B cell (primary cell): ENCODE measurements at regions of chr7 and their contacts with region 1.

Region 1: DNA sequence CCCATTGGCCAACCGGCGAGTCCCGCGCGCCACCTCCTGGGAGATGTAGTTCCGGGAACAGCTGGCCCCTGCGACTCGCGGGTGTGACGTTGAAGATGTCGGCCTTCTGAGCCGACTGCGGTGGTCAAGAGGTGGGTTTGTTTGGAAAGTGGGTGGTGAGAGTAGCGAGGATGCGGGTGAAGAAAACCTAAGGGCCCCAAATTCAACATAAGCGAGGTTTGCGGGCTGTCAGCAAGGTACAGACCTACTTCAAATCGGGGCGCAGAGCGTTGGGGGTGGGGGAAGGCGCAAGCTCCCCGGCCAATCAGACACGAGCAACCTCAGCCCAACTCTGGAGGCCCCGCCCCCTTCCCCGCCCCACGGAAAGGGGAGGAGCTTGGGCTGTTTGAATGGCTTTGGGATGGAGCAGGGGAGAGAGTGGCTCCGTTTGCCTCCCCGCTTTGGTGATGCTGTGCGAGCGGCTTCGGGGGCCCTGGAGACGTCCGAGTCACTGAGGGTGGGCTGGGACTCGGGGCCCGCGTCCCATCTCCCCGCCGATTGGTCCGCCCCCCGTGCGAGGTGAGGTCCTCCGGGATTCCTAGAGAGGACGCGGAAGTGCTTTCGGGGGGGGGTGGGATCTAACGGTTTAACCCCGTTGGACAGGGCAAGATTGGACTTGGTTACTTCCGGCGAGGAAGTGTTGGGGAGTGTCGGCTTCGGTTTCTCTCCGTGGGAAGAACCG is at the start of gene ZKSCAN5:
- DNase-seq: peak; percentile 99
- ATAC-seq: peak; percentile 84
- H3K4me3 ChIP-seq: peak within 1 kb of the TSS; percentile 76 to 96 (median 93)
- H3K4me3 Mint-ChIP-seq: peak within 1 kb of the TSS; percentile 96
- H3K27ac ChIP-seq: peak within 1 kb of the TSS; percentile 77 to 80
- H3K27ac Mint-ChIP-seq: peak within 1 kb of the TSS; percentile 98
- H3K4me1 ChIP-seq: peaks cover 20 to 27% of the 10 kb centered on the region in 2 donors
- H3K4me1 Mint-ChIP-seq: peaks cover 31% of the 10 kb centered on the region
- H3K27me3 ChIP-seq: no peaks in the 10 kb centered on the region
- H3K27me3 Mint-ChIP-seq: no peaks in the 10 kb centered on the region
- CTCF ChIP-seq: no peak
- total RNA-seq, gene ZKSCAN5: 10.9 and 11.7 TPM in 2 replicates

Region 2: GRCh38 chr7:99465421-99465768 is 39.4 kb before region 1 on chr7:
- CTCF ChIA-PET with region 1: interaction called, 3 read pairs
- POLR2A ChIA-PET with region 1: interaction called, 4 read pairs
- intact Hi-C with region 1: loop called (anchors 1 kb)
- DNase-seq: no peak
- ATAC-seq: no peak
- H3K4me3 ChIP-seq: peak overlapping the region; percentile 80 to 96 (median 83)
- H3K4me3 Mint-ChIP-seq: peak overlapping the region; percentile 99
- H3K27ac ChIP-seq: peak overlapping the region; percentile 50 to 80
- H3K27ac Mint-ChIP-seq: peak overlapping the region; percentile 89
- H3K4me1 ChIP-seq: peaks cover 9 to 23% of the 10 kb centered on the region in 2 donors
- H3K4me1 Mint-ChIP-seq: peaks cover 25% of the 10 kb centered on the region
- H3K27me3 ChIP-seq: no peaks in the 10 kb centered on the region
- H3K27me3 Mint-ChIP-seq: no peaks in the 10 kb centered on the region
- CTCF ChIP-seq: no peak

Region 3: DNA sequence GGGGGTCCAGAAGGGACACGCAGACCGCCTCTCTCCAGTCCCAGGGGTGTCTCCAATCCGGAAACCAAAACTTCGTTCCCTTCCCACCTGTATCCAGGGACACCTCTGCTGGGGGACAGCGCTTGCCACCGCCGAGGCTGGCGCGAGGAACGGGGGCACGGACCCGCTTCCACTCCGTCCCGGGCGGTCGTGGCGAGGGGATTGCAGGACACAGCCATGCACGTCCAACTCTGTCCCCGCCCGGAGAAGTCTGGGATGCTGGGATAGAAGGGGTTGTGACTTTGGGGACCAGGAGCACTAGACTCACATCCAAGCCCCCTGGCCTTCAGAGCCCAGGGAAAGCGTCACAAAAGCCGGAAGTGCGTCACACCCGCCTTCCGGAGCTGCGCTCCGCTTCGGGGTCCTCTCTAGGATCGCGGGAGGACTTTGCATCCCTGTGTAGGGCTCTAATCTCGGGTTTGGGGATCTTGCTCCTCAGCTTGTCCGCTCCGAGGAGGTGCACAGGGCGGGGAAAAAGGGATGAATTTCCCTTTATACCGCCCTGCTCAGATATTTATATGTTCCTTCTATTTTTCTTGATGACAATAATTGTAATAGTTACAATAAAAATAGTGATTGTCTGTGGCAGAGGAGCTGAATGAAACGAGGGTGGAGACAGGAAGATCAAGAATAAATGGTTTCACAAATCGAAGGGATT is 47.2 kb after region 1 on chr7 and contains the start of gene FAM200A:
- CTCF ChIA-PET with region 1: interaction called, 4 read pairs
- POLR2A ChIA-PET with region 1: interaction called, 33 read pairs
- intact Hi-C with region 1: loop called (anchors 1 kb)
- DNase-seq: peak; percentile 92
- ATAC-seq: peak; percentile 97
- H3K4me3 ChIP-seq: peak within 1 kb of the TSS; percentile 76 to 99 (median 97)
- H3K4me3 Mint-ChIP-seq: peak within 1 kb of the TSS; percentile 88
- H3K27ac ChIP-seq: peak within 1 kb of the TSS; percentile 74 to 95
- H3K27ac Mint-ChIP-seq: peak within 1 kb of the TSS; percentile 86
- H3K4me1 ChIP-seq: peaks cover 17 to 22% of the 10 kb centered on the region in 2 donors
- H3K4me1 Mint-ChIP-seq: peaks cover 33% of the 10 kb centered on the region
- H3K27me3 ChIP-seq: no peaks in the 10 kb centered on the region
- H3K27me3 Mint-ChIP-seq: no peaks in the 10 kb centered on the region
- CTCF ChIP-seq: no peak
- total RNA-seq, gene FAM200A: 11.9 and 12.8 TPM in 2 replicates

Region 4: GRCh38 chr7:99579956-99580777 is 75.4 kb after region 1 on chr7:
- CTCF ChIA-PET with region 1: no interaction called
- POLR2A ChIA-PET with region 1: no interaction called
- intact Hi-C with region 1: loop called (anchors 1 kb)
- DNase-seq: peak; percentile 62
- ATAC-seq: peak; percentile 83
- H3K4me3 ChIP-seq: peak overlapping the region; percentile 34 to 75 (median 60)
- H3K4me3 Mint-ChIP-seq: peak overlapping the region; percentile 96
- H3K27ac ChIP-seq: no peak overlapping the region
- H3K27ac Mint-ChIP-seq: peak overlapping the region; percentile 87
- H3K4me1 ChIP-seq: peaks cover 7 to 19% of the 10 kb centered on the region in 2 donors
- H3K4me1 Mint-ChIP-seq: peaks cover 27% of the 10 kb centered on the region
- H3K27me3 ChIP-seq: peaks cover 0 to 3% (median 1%) of the 10 kb centered on the region in 4 experiments
- H3K27me3 Mint-ChIP-seq: peaks cover 9% of the 10 kb centered on the region
- CTCF ChIP-seq: peak; percentile 48

Region 5: GRCh38 chr7:100015232-100016209 is 510.8 kb after region 1 on chr7 and contains the start of gene ZKSCAN1:
- CTCF ChIA-PET with region 1: no interaction called
- POLR2A ChIA-PET with region 1: no interaction called
- intact Hi-C with region 1: loop called (anchors 1 kb)
- DNase-seq: peak; percentile 91
- ATAC-seq: peak; percentile 95
- H3K4me3 ChIP-seq: peak within 1 kb of the TSS; percentile 75 to 89 (median 85)
- H3K4me3 Mint-ChIP-seq: peak within 1 kb of the TSS; percentile 93
- H3K27ac ChIP-seq: peak within 1 kb of the TSS; percentile 80 to 87
- H3K27ac Mint-ChIP-seq: peak within 1 kb of the TSS; percentile 94
- H3K4me1 ChIP-seq: peaks cover 15 to 19% of the 10 kb centered on the region in 2 donors
- H3K4me1 Mint-ChIP-seq: peaks cover 38% of the 10 kb centered on the region
- H3K27me3 ChIP-seq: no peaks in the 10 kb centered on the region
- H3K27me3 Mint-ChIP-seq: peaks cover 6% of the 10 kb centered on the region
- CTCF ChIP-seq: no peak
- total RNA-seq, gene ZKSCAN1: 89.3 and 97.4 TPM in 2 replicates